Activated T-helper 2 cell treated with anti-CD3 and anti-CD28 coated beads, Interferon-gamma antibody, Interleukin-2, Interleukin-4, amounts not matched to agents 10 μg/mL and 5 μg/mL and 100 μg/mL, durations not matched to agents 14 hours and 24 hours and 36 hours (primary cell): ENCODE measurements at regions of chr3 and their contacts with region 1.

Region 1: DNA sequence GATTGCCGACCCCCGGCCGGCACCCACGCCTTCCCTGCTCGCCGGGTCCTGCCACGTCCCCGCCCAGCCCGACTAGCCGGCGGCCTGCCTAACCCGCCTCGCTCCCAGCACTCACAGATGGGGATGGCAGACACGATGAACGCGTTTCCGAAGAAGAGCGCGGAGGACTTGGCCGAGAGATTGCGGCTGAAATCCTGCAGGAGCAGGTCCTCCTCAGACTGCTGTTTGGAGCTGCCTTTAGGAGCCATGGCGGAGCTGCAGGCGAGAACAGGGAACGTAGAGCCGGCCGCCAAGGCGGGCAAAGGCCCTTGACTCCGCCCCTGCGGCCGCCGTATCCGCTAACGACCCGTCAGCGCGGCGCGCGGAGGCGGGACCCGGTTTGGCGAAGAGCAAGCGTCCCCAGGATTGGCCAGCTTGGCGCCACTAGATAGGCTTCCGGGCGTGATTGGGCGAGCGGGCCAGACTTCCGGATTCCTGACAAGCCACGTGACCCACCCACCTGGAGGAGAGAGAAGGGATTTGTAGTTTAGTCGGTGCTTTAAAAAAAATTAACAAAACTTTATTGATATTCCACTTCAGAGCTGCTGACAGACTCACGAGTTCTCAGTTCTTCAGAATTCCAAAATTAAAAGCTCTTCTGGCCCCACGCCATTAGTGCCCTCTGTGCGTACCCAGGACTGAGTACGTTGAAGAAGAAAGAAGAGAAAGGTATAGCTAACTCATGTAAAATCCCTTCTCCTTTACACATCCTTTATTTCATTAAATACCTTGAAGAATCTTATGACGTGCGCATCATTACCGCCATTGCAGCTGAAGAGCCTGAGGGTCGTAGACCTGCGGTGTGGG is at the start of gene SSR3:
- DNase-seq: peak; percentile 98
- H3K4me3 Mint-ChIP-seq: peak within 1 kb of the TSS; percentile 96
- H3K27ac Mint-ChIP-seq: peak within 1 kb of the TSS; percentile 92
- H3K4me1 Mint-ChIP-seq: peaks cover 47% of the 10 kb centered on the region
- H3K27me3 Mint-ChIP-seq: no peaks in the 10 kb centered on the region
- total RNA-seq, gene SSR3: 193 and 197 TPM in 2 replicates

Region 2: DNA sequence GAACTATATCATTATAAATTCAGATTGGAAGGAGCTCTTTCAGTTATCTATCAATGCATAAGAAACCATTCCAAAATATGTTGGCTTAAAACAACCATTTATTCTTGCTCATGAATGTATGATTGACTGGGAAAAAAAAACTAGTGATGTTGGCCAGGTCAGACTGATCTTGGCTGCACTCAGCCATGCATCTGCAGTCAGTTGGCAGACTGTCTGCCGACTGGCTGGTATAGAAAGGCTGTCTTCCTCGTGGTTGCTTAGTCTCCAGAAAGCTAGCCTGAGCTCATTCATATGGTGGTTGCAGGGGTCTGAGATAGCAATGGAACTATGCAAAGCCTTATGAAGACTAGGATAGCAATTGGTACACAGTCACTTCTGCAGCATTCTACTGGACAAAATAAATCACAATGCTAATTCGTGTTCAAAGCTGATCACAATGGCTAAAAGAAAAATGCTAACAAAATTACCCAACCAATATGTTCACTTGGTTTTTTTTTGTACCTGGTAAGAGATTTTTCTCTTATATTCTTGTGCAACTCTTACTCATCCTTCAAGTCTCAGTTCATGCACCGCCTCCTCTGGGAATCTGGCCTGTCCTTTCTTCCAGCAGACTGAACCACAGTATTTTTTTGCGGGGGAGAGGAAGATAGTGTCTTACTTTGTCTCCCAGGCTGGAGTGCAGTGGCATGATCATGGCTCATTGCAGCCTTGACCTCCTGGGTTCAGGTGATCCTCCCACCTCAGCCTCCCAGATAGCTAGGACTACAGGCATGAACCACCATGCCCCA is 307.9 kb before region 1 on chr3:
- intact Hi-C with region 1: no loop called
- DNase-seq: no peak
- H3K4me3 Mint-ChIP-seq: no peak overlapping the region
- H3K27ac Mint-ChIP-seq: no peak overlapping the region
- H3K4me1 Mint-ChIP-seq: no peaks in the 10 kb centered on the region
- H3K27me3 Mint-ChIP-seq: peaks cover 1% of the 10 kb centered on the region

Region 3: GRCh38 chr3:156483961-156484787 is 70.9 kb before region 1 on chr3:
- intact Hi-C with region 1: loop called (anchors 2 kb)
- DNase-seq: peak; percentile 49
- H3K4me3 Mint-ChIP-seq: peak overlapping the region; percentile 62
- H3K27ac Mint-ChIP-seq: peak overlapping the region; percentile 86
- H3K4me1 Mint-ChIP-seq: peaks cover 24% of the 10 kb centered on the region
- H3K27me3 Mint-ChIP-seq: peaks cover 24% of the 10 kb centered on the region

Region 4: GRCh38 chr3:156816800-156817645 is 262.0 kb after region 1 on chr3:
- intact Hi-C with region 1: loop called (anchors 1 kb)
- DNase-seq: peak; percentile 94
- H3K4me3 Mint-ChIP-seq: peak overlapping the region; percentile 84
- H3K27ac Mint-ChIP-seq: peak overlapping the region; percentile 95
- H3K4me1 Mint-ChIP-seq: peaks cover 67% of the 10 kb centered on the region
- H3K27me3 Mint-ChIP-seq: no peaks in the 10 kb centered on the region

Region 5: DNA sequence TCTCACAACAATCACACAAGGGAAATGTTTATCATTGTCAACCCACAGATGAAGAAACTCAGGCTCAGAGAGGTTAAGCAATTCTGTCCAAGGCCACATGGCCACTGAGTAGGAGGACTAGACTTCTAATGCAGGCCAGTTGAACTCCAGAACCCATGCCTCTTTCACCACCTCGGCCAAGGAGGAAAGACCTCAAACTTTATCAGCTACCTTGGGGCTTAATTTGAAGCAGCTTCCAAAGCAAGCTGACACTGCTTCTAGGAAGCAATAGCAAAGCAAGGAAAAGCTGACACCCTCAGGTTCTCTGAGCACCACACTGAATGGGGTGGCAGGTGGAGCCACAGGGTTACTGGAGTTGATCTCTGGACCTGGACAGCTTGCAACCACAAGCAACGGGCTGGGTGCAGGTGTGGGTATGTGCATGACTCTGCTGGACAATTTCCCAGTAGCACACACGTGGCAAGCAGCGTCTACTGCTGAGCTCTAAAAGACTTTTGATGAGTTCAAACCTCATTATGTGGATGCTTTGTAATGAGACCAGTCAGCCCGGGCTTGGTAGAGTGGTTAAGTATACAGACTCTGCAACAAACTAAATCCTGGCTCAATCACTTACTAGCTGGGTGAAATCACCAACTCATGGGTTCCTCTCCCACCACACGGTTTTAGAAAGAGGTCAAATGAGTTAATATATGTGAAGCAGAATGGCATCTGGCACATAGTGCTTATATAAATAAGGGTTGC is 581.8 kb after region 1 on chr3:
- intact Hi-C with region 1: loop called (anchors 2 kb)
- DNase-seq: no peak
- H3K4me3 Mint-ChIP-seq: no peak overlapping the region
- H3K27ac Mint-ChIP-seq: peak overlapping the region; percentile 24
- H3K4me1 Mint-ChIP-seq: peaks cover 54% of the 10 kb centered on the region
- H3K27me3 Mint-ChIP-seq: no peaks in the 10 kb centered on the region

Region 6: GRCh38 chr3:157174649-157175498 is 619.8 kb after region 1 on chr3:
- intact Hi-C with region 1: loop called (anchors 1 kb)
- DNase-seq: peak; percentile 99
- H3K4me3 Mint-ChIP-seq: peak overlapping the region; percentile 97
- H3K27ac Mint-ChIP-seq: peak overlapping the region; percentile 96
- H3K4me1 Mint-ChIP-seq: peaks cover 38% of the 10 kb centered on the region
- H3K27me3 Mint-ChIP-seq: no peaks in the 10 kb centered on the region

Region 7: GRCh38 chr3:157290766-157291165 is 735.7 kb after region 1 on chr3:
- intact Hi-C with region 1: no loop called
- DNase-seq: no peak
- H3K4me3 Mint-ChIP-seq: no peak overlapping the region
- H3K27ac Mint-ChIP-seq: no peak overlapping the region
- H3K4me1 Mint-ChIP-seq: no peaks in the 10 kb centered on the region
- H3K27me3 Mint-ChIP-seq: peaks cover 4% of the 10 kb centered on the region